GM10248 (cell line): ENCODE measurements at regions of chr16 and their contacts with region 1.

Region 1: DNA sequence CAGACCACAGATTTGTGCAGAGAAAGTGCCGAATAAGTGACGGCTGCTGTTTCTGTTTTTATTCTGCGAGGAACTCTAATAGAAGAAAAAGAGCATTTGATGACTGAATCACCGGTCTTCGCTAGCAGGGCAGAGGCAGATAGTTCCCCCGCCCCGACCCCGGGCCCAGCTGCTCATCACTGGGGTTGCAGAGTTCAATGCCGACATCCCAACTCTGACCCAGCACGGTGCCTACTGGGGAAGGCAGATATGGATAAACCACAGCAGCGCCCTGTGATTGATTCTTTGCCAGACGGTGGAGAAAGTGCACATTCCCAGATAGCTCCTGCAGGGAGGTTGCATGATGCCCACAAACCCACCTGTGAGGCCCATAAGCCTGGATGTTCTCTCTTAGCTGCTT is 357.9 kb upstream of the HSBP1 start:
- DNase-seq: no peak
- CTCF ChIP-seq: no peak

Region 2: DNA sequence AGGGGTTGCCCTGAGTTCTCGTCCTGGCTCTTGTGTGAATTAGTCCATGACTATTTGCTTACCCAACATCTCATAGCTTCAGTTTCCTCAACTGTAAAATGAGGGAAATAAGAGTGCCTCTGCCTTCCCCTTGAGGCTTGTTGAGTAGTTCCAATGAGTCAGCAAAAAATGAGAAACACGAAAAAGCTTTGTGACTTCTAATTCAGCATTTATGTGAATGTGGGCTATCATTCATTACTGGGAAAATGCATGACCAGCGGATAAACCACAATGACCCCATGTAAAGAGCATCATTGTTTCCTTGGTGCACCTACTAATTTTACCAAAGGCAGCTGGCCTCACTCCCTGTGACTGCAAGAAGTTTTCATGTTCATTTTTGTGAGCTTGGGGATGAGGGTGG is 16.7 kb before region 1 on chr16:
- CTCF ChIA-PET with region 1: interaction called, 17 read pairs
- POLR2A ChIA-PET with region 1: no interaction called
- DNase-seq: no peak
- CTCF ChIP-seq: no peak

Region 3: DNA sequence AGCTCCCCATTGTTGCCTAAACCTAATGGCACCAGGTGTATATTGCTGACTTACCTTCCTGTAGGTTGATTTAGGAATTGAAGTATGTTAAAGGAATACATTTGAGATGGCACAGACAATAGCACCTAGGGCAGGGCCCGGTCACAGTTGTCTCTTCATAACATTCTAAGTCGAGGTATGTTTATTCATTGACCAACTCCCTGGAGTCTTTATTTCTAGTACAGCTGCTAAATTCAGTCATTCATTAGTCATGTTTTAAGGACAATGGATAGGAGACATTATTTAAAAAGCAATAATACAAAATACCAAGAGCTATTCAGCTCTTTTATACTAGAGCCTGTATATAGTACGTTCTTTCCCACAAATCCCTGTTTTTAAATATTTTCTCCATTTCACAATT is 11.5 kb before region 1 on chr16:
- CTCF ChIA-PET with region 1: interaction called, 17 read pairs
- POLR2A ChIA-PET with region 1: no interaction called
- DNase-seq: no peak
- CTCF ChIP-seq: no peak